GM10248 (cell line): ENCODE measurements at regions of chr3 and their contacts with region 1.

Region 1: DNA sequence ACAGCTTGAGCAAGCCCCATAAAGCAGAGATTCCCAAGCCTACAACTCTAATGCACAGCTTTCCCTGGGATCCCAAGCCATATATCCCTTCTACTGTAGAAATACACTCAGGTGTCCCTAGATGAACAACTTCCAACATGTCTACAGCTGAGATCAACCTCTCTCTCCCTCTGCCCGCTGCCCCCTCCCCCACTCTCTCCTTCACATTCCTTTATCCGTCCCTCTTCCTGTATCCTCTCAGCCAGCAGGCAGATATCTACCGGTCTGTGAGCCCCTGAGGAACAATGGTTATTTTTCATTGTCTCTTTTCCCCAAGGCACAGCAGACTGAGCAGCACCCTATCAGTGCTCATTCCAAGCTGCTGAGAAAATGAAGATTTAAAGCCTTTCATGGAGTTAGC is 138.6 kb downstream of the SUCLG2 start:
- DNase-seq: no peak
- CTCF ChIP-seq: no peak

Region 2: GRCh38 chr3:67529337-67529736 is 13.6 kb after region 1 on chr3:
- CTCF ChIA-PET with region 1: interaction called, 14 read pairs
- POLR2A ChIA-PET with region 1: no interaction called
- DNase-seq: no peak
- CTCF ChIP-seq: no peak

Region 3: GRCh38 chr3:67593761-67594244 is 78.0 kb after region 1 on chr3:
- CTCF ChIA-PET with region 1: no interaction called
- POLR2A ChIA-PET with region 1: no interaction called
- DNase-seq: no peak
- CTCF ChIP-seq: no peak